BJ (cell line): ENCODE measurements at regions of chr4 and their contacts with region 1.

Region 1: DNA sequence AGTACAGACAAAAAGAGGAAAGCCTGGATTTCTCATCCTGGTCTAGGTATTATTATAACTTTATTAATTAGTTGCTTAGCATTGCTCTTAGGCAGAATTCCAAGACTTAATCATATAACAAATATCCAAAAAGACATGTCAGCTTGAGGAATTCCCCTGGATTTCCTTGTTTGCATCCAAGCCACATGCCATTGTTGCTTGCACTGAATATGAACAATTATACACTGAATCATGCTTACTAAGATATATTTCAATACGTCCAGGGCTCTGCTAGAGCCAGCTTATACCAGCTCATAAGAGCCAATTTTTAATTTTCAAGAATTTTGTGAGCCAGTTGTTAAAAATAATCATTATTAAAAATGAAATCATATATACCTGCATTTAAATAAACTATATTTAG is 5.5 kb upstream of the TLR10 start:
- DNase-seq: no peak
- H3K4me3 ChIP-seq: no peak overlapping the region
- H3K27me3 ChIP-seq: peaks cover 5% of the 10 kb centered on the region
- CTCF ChIP-seq: no peak

Region 2: DNA sequence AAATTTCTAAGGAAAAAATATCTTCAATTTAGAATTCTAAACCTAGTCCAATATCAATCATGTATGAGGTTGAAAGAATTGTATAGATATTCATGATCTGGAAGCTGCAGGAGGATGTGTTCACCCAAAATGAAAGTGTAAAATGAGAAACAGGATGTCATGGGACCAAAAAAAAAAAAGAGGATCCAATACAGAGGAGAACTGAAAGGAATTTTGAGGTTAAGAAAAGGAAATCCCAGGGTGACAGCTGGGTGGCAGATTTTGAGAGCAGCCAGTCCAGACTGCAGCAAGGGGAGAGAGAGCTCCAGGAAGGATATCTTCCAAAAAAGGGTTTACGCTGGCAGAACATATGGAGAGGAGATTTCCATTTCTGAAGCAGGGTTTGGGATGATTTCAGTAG is 44.5 kb before region 1 on chr4:
- CTCF ChIA-PET with region 1: no interaction called
- POLR2A ChIA-PET with region 1: no interaction called
- DNase-seq: no peak
- H3K4me3 ChIP-seq: no peak overlapping the region
- H3K27me3 ChIP-seq: no peaks in the 10 kb centered on the region; the same call in 1 of the 2 replicates
- CTCF ChIP-seq: no peak

Region 3: DNA sequence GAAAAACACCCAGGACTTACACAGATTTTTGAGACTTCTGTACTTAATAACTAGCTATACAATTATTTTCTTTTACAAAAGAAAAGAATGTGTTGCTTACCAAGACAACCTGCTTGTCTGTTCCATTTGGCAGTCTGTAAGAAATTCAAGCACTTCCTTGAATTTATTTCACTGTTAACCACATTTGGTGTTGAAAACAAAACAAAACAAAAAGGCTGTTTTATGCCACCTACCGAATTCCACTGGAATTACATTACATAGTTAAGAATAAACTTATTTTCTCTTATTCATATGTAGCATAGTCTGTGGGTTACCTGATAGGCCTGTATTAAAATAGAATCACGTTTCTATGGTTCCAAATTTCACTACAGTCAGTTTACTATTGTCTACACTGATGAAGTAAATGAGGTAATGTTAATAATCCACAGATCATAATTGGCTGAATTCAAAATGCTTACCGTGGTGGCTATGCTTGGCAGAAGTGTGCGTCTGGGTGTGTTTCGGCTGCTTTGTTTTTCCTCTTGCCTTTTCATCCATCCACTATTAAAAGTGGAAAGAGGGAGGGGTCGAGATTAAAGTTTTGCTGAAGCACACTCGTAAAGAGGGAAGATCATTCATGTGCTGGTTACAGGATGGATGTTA is 16.4 kb after region 1 on chr4 and contains the start of gene TLR1:
- CTCF ChIA-PET with region 1: interaction called, 20 read pairs
- POLR2A ChIA-PET with region 1: no interaction called
- DNase-seq: no peak
- H3K4me3 ChIP-seq: no peak within 1 kb of the TSS
- H3K27me3 ChIP-seq: no peaks in the 10 kb centered on the region
- CTCF ChIP-seq: peak; percentile 51
- polyA plus RNA-seq, gene TLR1: 0.05 and 0.16 TPM in 2 replicates